ENCODE measurements at regions of chr16 and their contacts with region 1.

Region 1: DNA sequence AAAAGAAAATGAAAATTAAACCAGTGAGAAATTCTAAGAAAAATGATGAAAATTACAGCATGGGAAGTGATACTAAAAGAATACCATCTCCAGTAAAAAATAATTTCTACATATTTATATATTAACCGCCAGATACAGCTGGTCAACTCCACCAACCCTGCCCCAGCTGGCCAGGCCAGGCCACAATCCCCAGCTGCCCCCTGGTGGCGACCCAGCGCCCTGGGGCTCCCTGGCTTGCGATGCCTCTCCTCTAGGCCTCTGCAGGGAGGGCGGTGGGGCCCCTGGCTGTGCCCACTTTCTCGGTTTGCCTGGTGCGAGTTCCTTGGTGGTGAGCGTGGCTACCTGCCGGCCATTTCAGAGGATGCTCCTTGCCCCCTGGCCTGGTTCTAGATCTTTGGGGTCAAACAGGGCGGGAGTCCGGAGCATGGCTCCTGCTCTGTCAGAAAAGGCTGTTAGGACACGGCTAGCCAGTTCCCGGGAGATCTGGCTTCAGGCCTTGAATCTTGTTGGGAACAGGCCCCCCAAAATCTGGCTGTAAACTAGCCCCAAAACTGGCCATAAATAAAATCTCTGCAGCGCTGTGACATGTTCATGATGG is 14.5 kb downstream of the GLIS2 start:
- DNase-seq: peak; percentile 79
- ATAC-seq: peak; percentile 74
- H3K4me3 Mint-ChIP-seq: no peak overlapping the region
- H3K27ac Mint-ChIP-seq: no peak overlapping the region
- H3K4me1 Mint-ChIP-seq: peaks cover 9% of the 10 kb centered on the region
- H3K27me3 Mint-ChIP-seq: no peaks in the 10 kb centered on the region

Region 2: DNA sequence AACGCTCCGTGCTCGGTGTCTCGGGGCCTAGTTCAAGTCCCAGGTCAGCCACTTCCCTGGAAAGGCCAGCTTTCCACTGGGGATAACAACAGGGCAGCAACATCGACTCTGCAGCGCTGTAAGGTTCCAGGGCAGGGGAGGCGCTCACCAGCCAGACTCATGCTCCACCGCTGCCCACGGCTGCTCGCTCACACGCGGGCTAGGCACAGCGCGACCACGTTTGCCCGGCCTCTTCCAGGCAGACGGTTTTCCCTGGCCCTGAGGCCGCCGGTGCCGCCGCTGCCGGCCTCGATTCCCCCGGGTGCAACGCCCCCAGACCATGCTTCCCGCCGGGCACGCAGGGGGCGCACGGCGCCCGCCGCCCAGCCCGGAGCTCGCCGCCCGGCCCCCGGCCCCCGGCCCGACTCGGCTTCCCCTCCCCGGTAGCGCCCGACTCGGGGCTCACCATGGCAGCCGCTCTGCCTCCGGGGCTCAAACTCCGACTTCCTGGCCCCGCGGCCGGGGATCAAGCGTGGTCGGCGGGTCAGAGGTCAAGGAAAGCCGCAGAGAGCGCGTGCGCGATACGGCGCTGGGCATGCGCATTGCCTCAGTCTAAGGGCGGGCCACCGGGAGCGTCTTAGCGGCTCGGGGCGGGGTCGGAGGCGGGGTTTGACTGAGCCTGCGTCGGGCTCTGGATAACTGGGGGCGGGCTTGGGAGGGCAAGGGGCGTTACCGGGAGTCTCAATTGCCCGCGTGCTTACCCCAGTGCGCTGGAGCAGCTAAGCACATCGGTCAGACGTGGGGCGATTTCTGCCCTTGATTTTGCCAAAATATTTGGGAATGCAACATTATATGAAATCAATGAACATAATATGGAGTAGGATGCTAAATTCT is 20.6 kb after region 1 on chr16 and contains the start of gene PAM16:
- CTCF ChIA-PET with region 1: interaction called, 12 read pairs
- POLR2A ChIA-PET with region 1: interaction called, 3 read pairs
- DNase-seq: peak; percentile 98
- ATAC-seq: peak; percentile 95
- H3K4me3 Mint-ChIP-seq: peak within 1 kb of the TSS; percentile 98
- H3K27ac Mint-ChIP-seq: peak within 1 kb of the TSS; percentile 92
- H3K4me1 Mint-ChIP-seq: peaks cover 17% of the 10 kb centered on the region
- H3K27me3 Mint-ChIP-seq: no peaks in the 10 kb centered on the region
- total RNA-seq, gene PAM16: 33.3 to 40.3 TPM

Region 3: GRCh38 chr16:4506450-4506849 is 176.1 kb after region 1 on chr16:
- CTCF ChIA-PET with region 1: no interaction called
- POLR2A ChIA-PET with region 1: no interaction called
- DNase-seq: peak; percentile 74
- ATAC-seq: peak; percentile 60
- H3K4me3 Mint-ChIP-seq: peak overlapping the region; percentile 73
- H3K27ac Mint-ChIP-seq: peak overlapping the region; percentile 95
- H3K4me1 Mint-ChIP-seq: peaks cover 63% of the 10 kb centered on the region
- H3K27me3 Mint-ChIP-seq: no peaks in the 10 kb centered on the region

Measured in activated CD8-positive, alpha-beta T cell treated with anti-CD3 and anti-CD28 coated beads, Interleukin-2, amount 10 ng/mL, durations not matched to agents 7 days and 5 days (primary cell).